B cell (primary cell): ENCODE measurements at regions of chr1 and their contacts with region 1.

Region 1: GRCh38 chr1:178784131-178784536 is 59.1 kb downstream of the RALGPS2 start:
- DNase-seq: no peak
- ATAC-seq: no peak
- H3K4me3 ChIP-seq: no peak overlapping the region
- H3K4me3 Mint-ChIP-seq: no peak overlapping the region
- H3K27ac ChIP-seq: peak overlapping the region in 1 of 2 donors; percentile 81
- H3K27ac Mint-ChIP-seq: peak overlapping the region; percentile 68
- H3K4me1 ChIP-seq: peaks cover 22 to 47% of the 10 kb centered on the region in 2 donors
- H3K4me1 Mint-ChIP-seq: peaks cover 69% of the 10 kb centered on the region
- H3K27me3 ChIP-seq: no peaks in the 10 kb centered on the region
- H3K27me3 Mint-ChIP-seq: no peaks in the 10 kb centered on the region
- CTCF ChIP-seq: no peak

Region 2: DNA sequence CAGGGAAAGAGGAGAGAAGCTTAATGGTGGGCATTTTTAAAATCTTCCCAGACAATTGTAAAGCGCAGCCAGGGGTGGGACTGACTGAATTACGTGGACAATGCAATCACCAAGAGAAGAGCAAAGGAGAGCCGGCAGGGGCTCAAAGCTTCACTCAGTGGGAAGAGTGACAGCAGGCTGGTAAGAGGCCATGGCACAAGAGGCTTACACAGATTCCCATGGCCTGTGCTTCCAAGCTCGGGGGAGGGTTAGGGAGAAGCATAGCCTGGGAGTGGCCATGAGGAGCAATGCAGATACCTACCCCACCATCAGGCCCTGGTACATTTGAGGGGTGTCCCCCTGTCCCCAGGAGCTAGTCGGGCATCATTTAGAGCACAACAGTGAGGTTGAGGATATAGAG is 787.2 kb before region 1 on chr1:
- CTCF ChIA-PET with region 1: no interaction called
- POLR2A ChIA-PET with region 1: no interaction called
- intact Hi-C with region 1: no loop called
- DNase-seq: no peak
- ATAC-seq: no peak
- H3K4me3 ChIP-seq: no peak overlapping the region
- H3K4me3 Mint-ChIP-seq: no peak overlapping the region
- H3K27ac ChIP-seq: no peak overlapping the region
- H3K27ac Mint-ChIP-seq: no peak overlapping the region
- H3K4me1 ChIP-seq: no peaks in the 10 kb centered on the region
- H3K4me1 Mint-ChIP-seq: no peaks in the 10 kb centered on the region
- H3K27me3 ChIP-seq: no peaks in the 10 kb centered on the region
- H3K27me3 Mint-ChIP-seq: peaks cover 5% of the 10 kb centered on the region
- CTCF ChIP-seq: no peak

Region 3: DNA sequence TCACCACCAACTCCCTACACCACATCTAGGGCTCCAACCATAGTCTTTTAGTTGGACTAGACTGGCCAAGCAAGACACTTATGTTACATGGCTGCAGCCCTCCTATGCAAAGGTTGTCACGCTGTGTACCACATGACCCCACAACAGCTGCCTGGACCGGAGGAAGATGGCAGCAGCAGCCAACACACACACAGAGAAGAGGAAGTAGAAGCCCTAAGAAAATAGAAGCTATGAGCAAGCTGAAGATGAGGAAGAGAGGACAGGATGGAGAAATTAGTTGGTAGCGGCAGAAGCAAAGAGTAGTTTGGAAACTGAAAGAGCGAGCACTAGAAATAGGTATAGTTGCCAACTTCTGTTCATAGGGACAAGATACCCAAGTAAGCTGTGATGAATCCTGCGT is 119.9 kb before region 1 on chr1:
- CTCF ChIA-PET with region 1: no interaction called
- POLR2A ChIA-PET with region 1: no interaction called
- intact Hi-C with region 1: no loop called
- DNase-seq: peak; percentile 82
- ATAC-seq: peak; percentile 89
- H3K4me3 ChIP-seq: peak overlapping the region in 2 of 5 experiments; percentile 13 to 17
- H3K4me3 Mint-ChIP-seq: peak overlapping the region; percentile 47
- H3K27ac ChIP-seq: peak overlapping the region; percentile 70 to 84
- H3K27ac Mint-ChIP-seq: peak overlapping the region; percentile 84
- H3K4me1 ChIP-seq: peaks cover 80 to 92% of the 10 kb centered on the region in 2 donors
- H3K4me1 Mint-ChIP-seq: peaks cover 83% of the 10 kb centered on the region
- H3K27me3 ChIP-seq: no peaks in the 10 kb centered on the region
- H3K27me3 Mint-ChIP-seq: no peaks in the 10 kb centered on the region
- CTCF ChIP-seq: no peak

Region 4: GRCh38 chr1:178733972-178734371 is 50.2 kb before region 1 on chr1:
- CTCF ChIA-PET with region 1: no interaction called
- POLR2A ChIA-PET with region 1: interaction called, 10 read pairs
- intact Hi-C with region 1: no loop called
- DNase-seq: no peak
- ATAC-seq: no peak
- H3K4me3 ChIP-seq: no peak overlapping the region
- H3K4me3 Mint-ChIP-seq: peak overlapping the region; percentile 38
- H3K27ac ChIP-seq: peak overlapping the region in 1 of 2 donors; percentile 78
- H3K27ac Mint-ChIP-seq: peak overlapping the region; percentile 32
- H3K4me1 ChIP-seq: peaks cover 45 to 60% of the 10 kb centered on the region in 2 donors
- H3K4me1 Mint-ChIP-seq: peaks cover 65% of the 10 kb centered on the region
- H3K27me3 ChIP-seq: no peaks in the 10 kb centered on the region
- H3K27me3 Mint-ChIP-seq: no peaks in the 10 kb centered on the region
- CTCF ChIP-seq: peak; percentile 50

Region 5: DNA sequence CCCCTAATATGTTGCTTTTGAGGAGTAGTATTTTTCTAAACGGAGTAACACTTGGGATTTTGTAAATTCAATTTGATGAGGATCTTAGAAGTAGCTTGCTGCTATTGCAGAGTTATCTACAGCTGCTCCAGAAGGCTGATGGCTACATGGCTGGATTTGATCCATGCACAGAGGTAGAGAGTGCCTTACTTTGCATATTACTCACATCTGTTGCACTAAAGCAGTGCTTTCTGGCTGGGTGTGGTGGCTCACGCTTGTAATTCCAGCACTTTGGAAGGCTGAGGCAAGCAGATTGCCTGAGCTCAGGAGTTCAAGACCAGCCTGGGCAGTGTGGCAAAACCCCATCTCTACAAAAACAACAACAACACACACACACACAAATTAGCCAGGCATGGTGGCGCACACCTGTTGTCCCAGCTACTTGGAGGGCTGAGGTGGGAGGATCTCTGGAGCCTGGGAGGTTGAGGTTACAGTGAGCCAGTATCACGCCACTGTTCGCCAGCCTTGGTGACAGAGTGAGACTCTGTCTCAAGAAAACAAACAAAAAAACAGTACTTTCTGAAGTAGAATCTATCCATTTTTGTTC is 34.5 kb before region 1 on chr1:
- CTCF ChIA-PET with region 1: no interaction called
- POLR2A ChIA-PET with region 1: no interaction called
- intact Hi-C with region 1: loop called (anchors 5 kb)
- DNase-seq: no peak
- ATAC-seq: no peak
- H3K4me3 ChIP-seq: no peak overlapping the region
- H3K4me3 Mint-ChIP-seq: peak overlapping the region; percentile 19
- H3K27ac ChIP-seq: peak overlapping the region in 1 of 2 donors; percentile 78
- H3K27ac Mint-ChIP-seq: peak overlapping the region; percentile 56
- H3K4me1 ChIP-seq: peaks cover 31 to 36% of the 10 kb centered on the region in 2 donors
- H3K4me1 Mint-ChIP-seq: peaks cover 65% of the 10 kb centered on the region
- H3K27me3 ChIP-seq: no peaks in the 10 kb centered on the region
- H3K27me3 Mint-ChIP-seq: no peaks in the 10 kb centered on the region
- CTCF ChIP-seq: no peak

Region 6: GRCh38 chr1:178796013-178796412 is 11.9 kb after region 1 on chr1:
- CTCF ChIA-PET with region 1: interaction called, 3 read pairs
- POLR2A ChIA-PET with region 1: no interaction called
- intact Hi-C with region 1: loop called (anchors 2 kb)
- DNase-seq: peak; percentile 48
- ATAC-seq: peak; percentile 67
- H3K4me3 ChIP-seq: no peak overlapping the region
- H3K4me3 Mint-ChIP-seq: peak overlapping the region; percentile 55
- H3K27ac ChIP-seq: peak overlapping the region; percentile 43 to 87
- H3K27ac Mint-ChIP-seq: peak overlapping the region; percentile 76
- H3K4me1 ChIP-seq: peaks cover 22 to 33% of the 10 kb centered on the region in 2 donors
- H3K4me1 Mint-ChIP-seq: peaks cover 48% of the 10 kb centered on the region
- H3K27me3 ChIP-seq: no peaks in the 10 kb centered on the region
- H3K27me3 Mint-ChIP-seq: no peaks in the 10 kb centered on the region
- CTCF ChIP-seq: no peak

Region 7: DNA sequence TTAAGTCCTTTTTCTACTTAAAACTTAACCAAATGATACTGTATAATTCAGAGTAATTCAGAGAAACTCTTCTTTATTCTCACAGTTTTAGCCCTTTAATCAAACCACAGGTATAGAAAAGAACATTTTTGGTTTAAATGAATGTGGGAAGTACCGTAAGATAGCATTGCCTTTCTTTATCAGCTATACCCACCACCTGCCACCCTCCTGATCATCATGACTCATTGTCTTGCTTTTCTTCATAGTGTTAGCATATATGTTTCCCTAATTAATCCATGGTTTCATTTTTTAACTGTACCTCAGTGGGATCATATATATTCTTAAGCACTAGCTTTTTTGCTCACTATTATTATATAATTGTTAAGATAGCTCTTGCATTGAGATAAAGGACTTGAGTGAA is 114.3 kb after region 1 on chr1:
- CTCF ChIA-PET with region 1: no interaction called
- POLR2A ChIA-PET with region 1: no interaction called
- intact Hi-C with region 1: loop called (anchors 10 kb)
- DNase-seq: no peak
- ATAC-seq: no peak
- H3K4me3 ChIP-seq: no peak overlapping the region
- H3K4me3 Mint-ChIP-seq: no peak overlapping the region
- H3K27ac ChIP-seq: no peak overlapping the region
- H3K27ac Mint-ChIP-seq: peak overlapping the region; percentile 27
- H3K4me1 ChIP-seq: no peaks in the 10 kb centered on the region
- H3K4me1 Mint-ChIP-seq: peaks cover 18% of the 10 kb centered on the region
- H3K27me3 ChIP-seq: no peaks in the 10 kb centered on the region
- H3K27me3 Mint-ChIP-seq: no peaks in the 10 kb centered on the region
- CTCF ChIP-seq: no peak